SK-N-SH (cell line): ENCODE measurements at regions of chr4 and their contacts with region 1.

Region 1: GRCh38 chr4:41204400-41204978 is 9.9 kb downstream of the APBB2 start:
- DNase-seq: no peak
- H3K4me3 ChIP-seq: no peak overlapping the region
- H3K27ac ChIP-seq: peak overlapping the region; percentile 78 to 96
- H3K4me1 ChIP-seq: peaks cover 8 to 72% of the 10 kb centered on the region in 2 experiments
- H3K27me3 ChIP-seq: no peaks in the 10 kb centered on the region
- CTCF ChIP-seq: no peak
- EP300 ChIP-seq: peak in 1 of 2 experiments; percentile 75; a peak in 1 of 4 replicates
- RAD21 ChIP-seq: no peak

Region 2: DNA sequence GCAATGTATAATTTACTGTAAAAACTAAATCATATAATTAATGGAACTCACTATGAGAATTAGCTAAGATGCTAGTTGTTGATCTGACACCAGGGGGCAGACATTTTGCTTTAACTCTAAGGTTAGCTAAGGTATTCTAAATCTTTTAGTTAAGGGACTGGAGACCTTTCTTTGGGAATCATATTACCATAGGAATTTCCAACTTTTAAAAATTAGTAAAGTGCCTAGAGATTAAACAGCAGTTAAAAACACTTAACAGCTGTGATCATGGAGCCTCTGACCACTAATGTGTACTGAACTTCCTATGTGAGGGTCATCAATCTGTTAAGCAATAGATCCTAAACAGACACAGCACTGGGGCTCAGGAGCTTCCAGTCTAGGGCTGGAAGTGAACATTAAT is 228.1 kb before region 1 on chr4:
- CTCF ChIA-PET with region 1: interaction called, 10 read pairs
- POLR2A ChIA-PET with region 1: no interaction called
- DNase-seq: peak; percentile 55
- H3K4me3 ChIP-seq: no peak overlapping the region
- H3K27ac ChIP-seq: no peak overlapping the region
- H3K4me1 ChIP-seq: 0 out of 4 replicates have a peak, but pooled peaks cover 0 to 12% of the 10 kb centered on the region in 2 experiments
- H3K27me3 ChIP-seq: no peaks in the 10 kb centered on the region
- CTCF ChIP-seq: peak; percentile 85
- EP300 ChIP-seq: no peak
- RAD21 ChIP-seq: peak; percentile 69